Naive thymus-derived CD4-positive, alpha-beta T cell (primary cell): ENCODE measurements at regions of chr13 and their contacts with region 1.

Region 1: DNA sequence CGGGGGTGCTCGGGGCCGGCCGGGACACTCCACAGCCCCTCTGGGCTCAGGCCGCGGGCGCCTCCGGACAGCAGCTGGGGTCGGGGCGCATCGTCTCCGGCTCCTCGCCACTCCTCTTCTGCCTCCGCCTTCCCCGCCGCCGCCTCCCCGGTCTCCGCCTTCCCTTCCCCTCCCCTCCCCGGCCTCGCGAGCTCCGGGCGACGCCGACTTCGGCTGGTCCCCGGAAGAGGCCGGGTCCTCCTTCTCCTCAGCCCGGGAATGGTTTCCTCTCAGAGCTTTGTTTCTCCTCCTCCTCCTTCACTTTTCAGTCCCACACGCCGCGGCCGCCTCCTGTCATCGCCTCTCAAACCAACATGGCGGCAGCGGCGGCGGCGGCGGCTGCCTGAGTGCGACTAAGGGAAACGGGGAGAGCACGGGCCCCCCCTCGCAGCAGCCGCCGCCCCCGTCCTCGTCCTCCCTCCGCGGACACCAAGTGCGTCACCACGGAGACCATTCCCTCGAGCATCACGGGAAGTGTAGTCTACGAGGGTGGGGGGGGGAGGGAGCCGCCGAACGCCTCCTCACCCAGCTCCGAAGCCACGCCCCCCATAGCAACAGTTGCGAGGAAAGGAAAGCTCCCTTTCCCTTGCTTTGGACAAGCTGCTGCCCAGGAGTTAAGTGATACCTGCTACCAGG is at the start of gene UBL3:
- DNase-seq: peak; percentile 88 to 95 (median 92)
- ATAC-seq: peak; percentile 97
- H3K4me3 ChIP-seq: peak within 1 kb of the TSS; percentile 78
- H3K4me3 Mint-ChIP-seq: peak within 1 kb of the TSS; percentile 91 to 99 (median 96)
- H3K27ac ChIP-seq: peak within 1 kb of the TSS; percentile 98
- H3K27ac Mint-ChIP-seq: peak within 1 kb of the TSS; percentile 91 to 100 (median 99)
- H3K4me1 ChIP-seq: peaks cover 5 to 13% of the 10 kb centered on the region in 2 donors
- H3K4me1 Mint-ChIP-seq: peaks cover 10 to 42% (median 24%) of the 10 kb centered on the region in 7 donors
- H3K27me3 ChIP-seq: no peaks in the 10 kb centered on the region
- H3K27me3 Mint-ChIP-seq: no peaks in the 10 kb centered on the region
- total RNA-seq, gene UBL3: 12.7 to 34.5 (median 28.9) TPM

Region 2: GRCh38 chr13:29362849-29363604 is 487.3 kb before region 1 on chr13:
- CTCF ChIA-PET with region 1: no interaction called
- POLR2A ChIA-PET with region 1: no interaction called
- intact Hi-C with region 1: no loop called
- DNase-seq: peak in 5 of 9 donors; percentile 7 to 25 (median 16)
- ATAC-seq: peak; percentile 83
- H3K4me3 ChIP-seq: no peak overlapping the region
- H3K4me3 Mint-ChIP-seq: peak overlapping the region in 7 of 10 donors; percentile 5 to 51 (median 20)
- H3K27ac ChIP-seq: no peak overlapping the region
- H3K27ac Mint-ChIP-seq: no peak overlapping the region
- H3K4me1 ChIP-seq: no peaks in the 10 kb centered on the region
- H3K4me1 Mint-ChIP-seq: peaks cover 0 to 4% (median 0%) of the 10 kb centered on the region in 7 donors
- H3K27me3 ChIP-seq: no peaks in the 10 kb centered on the region
- H3K27me3 Mint-ChIP-seq: peaks cover 7 to 25% (median 11%) of the 10 kb centered on the region in 5 donors

Region 3: GRCh38 chr13:29595380-29596063 is 254.8 kb before region 1 on chr13 and contains the start of gene SLC7A1:
- CTCF ChIA-PET with region 1: no interaction called
- POLR2A ChIA-PET with region 1: interaction called, 3 read pairs
- intact Hi-C with region 1: loop called (anchors 1 kb)
- DNase-seq: peak; percentile 74 to 93 (median 85)
- ATAC-seq: peak; percentile 95
- H3K4me3 ChIP-seq: peak within 1 kb of the TSS; percentile 73
- H3K4me3 Mint-ChIP-seq: peak within 1 kb of the TSS; percentile 88 to 94 (median 90)
- H3K27ac ChIP-seq: peak within 1 kb of the TSS; percentile 82
- H3K27ac Mint-ChIP-seq: peak within 1 kb of the TSS; percentile 74 to 96 (median 87)
- H3K4me1 ChIP-seq: peaks cover 6 to 7% of the 10 kb centered on the region in 2 donors
- H3K4me1 Mint-ChIP-seq: peaks cover 26 to 49% (median 43%) of the 10 kb centered on the region in 7 donors
- H3K27me3 ChIP-seq: no peaks in the 10 kb centered on the region
- H3K27me3 Mint-ChIP-seq: peaks cover 0 to 3% (median 2%) of the 10 kb centered on the region in 5 donors
- total RNA-seq, gene SLC7A1: 12.2 to 63.8 (median 28.2) TPM

Region 4: GRCh38 chr13:29923554-29924481 is 73.5 kb after region 1 on chr13:
- CTCF ChIA-PET with region 1: interaction called, 4 read pairs
- POLR2A ChIA-PET with region 1: interaction called, 3 read pairs
- intact Hi-C with region 1: loop called in 1 of 2 experiments (anchors 1 kb)
- DNase-seq: peak in 5 of 9 donors; percentile 20 to 55 (median 21)
- ATAC-seq: peak; percentile 86
- H3K4me3 ChIP-seq: no peak overlapping the region
- H3K4me3 Mint-ChIP-seq: no peak overlapping the region
- H3K27ac ChIP-seq: no peak overlapping the region
- H3K27ac Mint-ChIP-seq: peak overlapping the region in 1 of 9 donors; percentile 32
- H3K4me1 ChIP-seq: no peaks in the 10 kb centered on the region
- H3K4me1 Mint-ChIP-seq: peaks cover 0 to 36% (median 13%) of the 10 kb centered on the region in 7 donors
- H3K27me3 ChIP-seq: no peaks in the 10 kb centered on the region
- H3K27me3 Mint-ChIP-seq: peaks cover 0 to 3% (median under 1%) of the 10 kb centered on the region in 5 donors

Region 5: GRCh38 chr13:30114571-30115256 is 264.4 kb after region 1 on chr13:
- CTCF ChIA-PET with region 1: interaction called, 109 read pairs
- POLR2A ChIA-PET with region 1: interaction called, 51 read pairs
- intact Hi-C with region 1: loop called (anchors 1 kb)
- DNase-seq: peak; percentile 81 to 94 (median 91)
- ATAC-seq: peak; percentile 95
- H3K4me3 ChIP-seq: peak overlapping the region; percentile 48
- H3K4me3 Mint-ChIP-seq: peak overlapping the region; percentile 74 to 89 (median 84)
- H3K27ac ChIP-seq: peak overlapping the region; percentile 39
- H3K27ac Mint-ChIP-seq: peak overlapping the region in 8 of 9 donors; percentile 43 to 90 (median 80)
- H3K4me1 ChIP-seq: peaks cover 10 to 17% of the 10 kb centered on the region in 2 donors
- H3K4me1 Mint-ChIP-seq: peaks cover 17 to 41% (median 34%) of the 10 kb centered on the region in 7 donors
- H3K27me3 ChIP-seq: no peaks in the 10 kb centered on the region
- H3K27me3 Mint-ChIP-seq: peaks cover 0 to 11% (median 0%) of the 10 kb centered on the region in 5 donors

Region 6: DNA sequence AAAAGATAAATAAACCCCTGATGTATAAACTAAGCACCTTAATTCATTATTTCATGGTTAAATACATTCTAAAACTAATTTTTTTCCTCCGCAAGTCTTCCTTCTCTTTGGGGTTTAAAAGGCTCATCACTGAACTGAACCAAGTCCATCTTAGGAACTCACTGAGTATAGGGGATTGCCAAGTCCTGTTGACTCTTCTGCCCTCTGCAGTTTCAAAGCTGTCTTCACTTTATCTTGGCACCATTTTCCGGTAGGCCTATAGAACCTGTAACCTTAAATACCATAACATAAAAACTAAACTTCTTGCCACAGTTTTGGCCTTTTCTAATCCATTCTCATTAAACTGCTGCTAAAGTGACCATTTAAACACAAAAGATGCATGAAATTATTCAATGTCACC is 700.8 kb after region 1 on chr13:
- CTCF ChIA-PET with region 1: no interaction called
- POLR2A ChIA-PET with region 1: no interaction called
- intact Hi-C with region 1: loop called in 1 of 2 experiments (anchors 5 kb)
- DNase-seq: peak in 7 of 9 donors; percentile 22 to 63 (median 44)
- ATAC-seq: peak; percentile 82
- H3K4me3 ChIP-seq: no peak overlapping the region
- H3K4me3 Mint-ChIP-seq: no peak overlapping the region
- H3K27ac ChIP-seq: no peak overlapping the region
- H3K27ac Mint-ChIP-seq: peak overlapping the region in 1 of 9 donors; percentile 26
- H3K4me1 ChIP-seq: no peaks in the 10 kb centered on the region
- H3K4me1 Mint-ChIP-seq: peaks cover 0 to 6% (median 2%) of the 10 kb centered on the region in 7 donors
- H3K27me3 ChIP-seq: no peaks in the 10 kb centered on the region
- H3K27me3 Mint-ChIP-seq: peaks cover 0 to 11% (median 0%) of the 10 kb centered on the region in 5 donors

Region 7: GRCh38 chr13:30739761-30740642 is 889.6 kb after region 1 on chr13:
- CTCF ChIA-PET with region 1: no interaction called
- POLR2A ChIA-PET with region 1: no interaction called
- intact Hi-C with region 1: loop called (anchors 5 kb)
- DNase-seq: peak in 8 of 9 donors; percentile 16 to 61 (median 32)
- ATAC-seq: peak; percentile 47
- H3K4me3 ChIP-seq: peak overlapping the region; percentile 29
- H3K4me3 Mint-ChIP-seq: peak overlapping the region; percentile 79 to 87 (median 82)
- H3K27ac ChIP-seq: no peak overlapping the region
- H3K27ac Mint-ChIP-seq: peak overlapping the region; percentile 7 to 93 (median 66)
- H3K4me1 ChIP-seq: peaks cover 59 to 60% of the 10 kb centered on the region in 2 donors
- H3K4me1 Mint-ChIP-seq: peaks cover 68 to 81% (median 79%) of the 10 kb centered on the region in 7 donors
- H3K27me3 ChIP-seq: no peaks in the 10 kb centered on the region
- H3K27me3 Mint-ChIP-seq: no peaks in the 10 kb centered on the region